ENCODE measurements at regions of chr15 and their contacts with region 1.

Region 1: DNA sequence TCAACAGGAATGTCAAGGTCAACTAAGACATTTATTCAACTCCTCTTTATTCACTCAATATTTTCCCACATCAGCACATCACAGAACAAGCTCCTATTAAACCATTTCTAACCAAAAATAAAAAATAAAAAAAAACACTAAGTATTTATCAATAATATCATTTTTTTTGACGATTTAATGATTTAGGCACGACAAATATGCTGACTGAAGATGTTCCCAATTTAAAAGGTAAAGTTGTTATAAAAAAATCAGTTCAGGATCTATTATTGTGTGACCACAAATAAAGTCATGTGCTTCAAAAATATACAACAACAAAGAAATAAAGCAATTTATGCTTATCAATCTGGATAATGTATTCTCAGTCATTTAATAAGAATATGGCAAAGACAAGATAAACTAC is 16.2 kb downstream of the DPH6 start:
- DNase-seq: no peak
- H3K4me3 ChIP-seq: no peak overlapping the region
- H3K27ac ChIP-seq: no peak overlapping the region
- H3K4me1 ChIP-seq: no peaks in the 10 kb centered on the region
- H3K27me3 ChIP-seq: no peaks in the 10 kb centered on the region
- CTCF ChIP-seq: no peak
- EP300 ChIP-seq: no peak
- POLR2A ChIP-seq: no peak

Region 2: DNA sequence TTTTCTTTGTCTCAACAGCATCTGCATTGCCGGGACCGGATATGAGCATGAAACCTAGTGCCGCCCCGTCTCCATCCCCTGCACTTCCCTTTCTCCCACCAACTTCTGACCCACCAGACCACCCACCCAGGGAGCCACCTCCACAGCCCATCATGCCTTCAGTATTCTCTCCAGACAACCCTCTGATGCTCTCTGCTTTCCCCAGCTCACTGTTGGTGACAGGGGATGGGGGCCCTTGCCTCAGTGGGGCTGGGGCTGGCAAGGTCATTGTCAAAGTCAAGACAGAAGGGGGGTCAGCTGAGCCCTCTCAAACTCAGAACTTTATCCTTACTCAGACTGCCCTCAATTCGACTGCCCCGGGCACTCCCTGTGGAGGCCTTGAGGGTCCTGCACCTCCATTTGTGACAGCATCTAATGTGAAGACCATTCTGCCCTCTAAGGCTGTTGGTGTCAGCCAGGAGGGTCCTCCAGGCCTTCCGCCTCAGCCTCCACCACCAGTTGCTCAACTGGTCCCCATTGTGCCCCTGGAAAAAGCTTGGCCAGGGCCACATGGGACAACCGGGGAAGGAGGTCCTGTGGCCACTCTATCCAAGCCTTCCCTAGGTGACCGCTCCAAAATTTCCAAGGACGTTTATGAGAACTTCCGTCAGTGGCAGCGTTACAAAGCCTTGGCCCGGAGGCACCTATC is 1181.7 kb before region 1 on chr15:
- intact Hi-C with region 1: loop called in 1 of 4 experiments (anchors 5 kb)
- DNase-seq: no peak
- H3K4me3 ChIP-seq: no peak overlapping the region
- H3K27ac ChIP-seq: no peak overlapping the region
- H3K4me1 ChIP-seq: no peaks in the 10 kb centered on the region
- H3K27me3 ChIP-seq: no peaks in the 10 kb centered on the region
- CTCF ChIP-seq: no peak
- EP300 ChIP-seq: no peak
- POLR2A ChIP-seq: no peak

Region 3: GRCh38 chr15:35319354-35319753 is 210.4 kb before region 1 on chr15:
- intact Hi-C with region 1: no loop called
- DNase-seq: no peak
- H3K4me3 ChIP-seq: no peak overlapping the region
- H3K27ac ChIP-seq: no peak overlapping the region
- H3K4me1 ChIP-seq: no peaks in the 10 kb centered on the region
- H3K27me3 ChIP-seq: no peaks in the 10 kb centered on the region
- CTCF ChIP-seq: no peak
- EP300 ChIP-seq: no peak
- POLR2A ChIP-seq: no peak